ENCODE measurements at regions of chr4 and their contacts with region 1.

Region 1: GRCh38 chr4:107863850-107864371 is 39.2 kb downstream of the SGMS2 start:
- DNase-seq: peak; percentile 60
- H3K4me3 Mint-ChIP-seq: no peak overlapping the region
- H3K27ac Mint-ChIP-seq: peak overlapping the region; percentile 28
- H3K4me1 Mint-ChIP-seq: peaks cover 21% of the 10 kb centered on the region
- H3K27me3 Mint-ChIP-seq: peaks cover 9% of the 10 kb centered on the region

Region 2: DNA sequence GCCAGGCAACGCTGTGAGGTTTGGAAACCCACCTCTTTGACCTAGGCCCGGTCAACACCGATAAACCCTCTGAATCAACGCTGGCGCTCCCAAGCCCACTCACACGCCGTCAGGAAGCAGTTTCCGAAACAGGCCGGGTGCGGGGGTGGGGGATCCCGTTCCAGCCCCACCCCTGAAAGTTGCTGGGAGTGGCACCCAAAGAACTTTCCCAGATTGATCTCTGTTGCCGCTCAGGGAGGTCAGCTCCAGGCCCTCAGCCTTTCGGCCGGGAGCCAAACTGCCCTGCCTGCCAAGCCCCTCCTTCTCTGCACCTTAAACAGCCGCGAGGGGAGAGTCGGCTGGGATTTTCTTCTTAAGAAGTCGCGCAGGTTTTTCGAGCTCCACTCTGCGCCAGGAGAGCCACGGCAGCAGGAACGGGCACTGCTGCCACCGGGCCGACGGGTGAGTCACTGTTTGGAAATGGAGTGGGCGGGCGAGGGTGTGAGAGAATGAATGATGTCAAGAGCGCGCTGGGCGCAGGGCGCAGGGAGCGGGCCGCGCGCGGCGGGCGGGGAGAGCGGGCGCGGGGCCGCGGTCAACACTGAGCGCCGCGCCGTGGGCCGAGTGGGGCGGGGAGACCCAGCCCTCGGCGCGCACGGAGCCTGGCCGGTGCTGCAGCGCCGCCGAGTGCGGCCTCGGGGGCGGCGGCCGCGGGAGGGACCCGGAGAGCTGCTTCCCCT is 39.4 kb before region 1 on chr4 and contains the start of gene SGMS2:
- CTCF ChIA-PET with region 1: no interaction called
- POLR2A ChIA-PET with region 1: no interaction called
- intact Hi-C with region 1: loop called (anchors 2 kb)
- DNase-seq: peak; percentile 86
- H3K4me3 Mint-ChIP-seq: peak within 1 kb of the TSS; percentile 77
- H3K27ac Mint-ChIP-seq: no peak within 1 kb of the TSS
- H3K4me1 Mint-ChIP-seq: peaks cover 9% of the 10 kb centered on the region
- H3K27me3 Mint-ChIP-seq: peaks cover 45% of the 10 kb centered on the region
- total RNA-seq, gene SGMS2: 0.36 to 0.76 TPM

Region 3: GRCh38 chr4:107838861-107839565 is 24.9 kb before region 1 on chr4:
- CTCF ChIA-PET with region 1: no interaction called
- POLR2A ChIA-PET with region 1: no interaction called
- intact Hi-C with region 1: no loop called
- DNase-seq: no peak
- H3K4me3 Mint-ChIP-seq: no peak overlapping the region
- H3K27ac Mint-ChIP-seq: no peak overlapping the region
- H3K4me1 Mint-ChIP-seq: no peaks in the 10 kb centered on the region
- H3K27me3 Mint-ChIP-seq: peaks cover 8% of the 10 kb centered on the region

Region 4: GRCh38 chr4:108118490-108118889 is 254.6 kb after region 1 on chr4:
- CTCF ChIA-PET with region 1: no interaction called
- POLR2A ChIA-PET with region 1: no interaction called
- intact Hi-C with region 1: no loop called
- DNase-seq: peak; percentile 47
- H3K4me3 Mint-ChIP-seq: peak overlapping the region; percentile 20
- H3K27ac Mint-ChIP-seq: peak overlapping the region; percentile 85
- H3K4me1 Mint-ChIP-seq: peaks cover 88% of the 10 kb centered on the region
- H3K27me3 Mint-ChIP-seq: no peaks in the 10 kb centered on the region

Measured in activated CD4-positive, alpha-beta memory T cell treated with anti-CD3 and anti-CD28 coated beads for 36 hours (primary cell).